Aorta (tissue), 5 donors: ENCODE measurements at regions of chr12 and their contacts with region 1.

Region 1: DNA sequence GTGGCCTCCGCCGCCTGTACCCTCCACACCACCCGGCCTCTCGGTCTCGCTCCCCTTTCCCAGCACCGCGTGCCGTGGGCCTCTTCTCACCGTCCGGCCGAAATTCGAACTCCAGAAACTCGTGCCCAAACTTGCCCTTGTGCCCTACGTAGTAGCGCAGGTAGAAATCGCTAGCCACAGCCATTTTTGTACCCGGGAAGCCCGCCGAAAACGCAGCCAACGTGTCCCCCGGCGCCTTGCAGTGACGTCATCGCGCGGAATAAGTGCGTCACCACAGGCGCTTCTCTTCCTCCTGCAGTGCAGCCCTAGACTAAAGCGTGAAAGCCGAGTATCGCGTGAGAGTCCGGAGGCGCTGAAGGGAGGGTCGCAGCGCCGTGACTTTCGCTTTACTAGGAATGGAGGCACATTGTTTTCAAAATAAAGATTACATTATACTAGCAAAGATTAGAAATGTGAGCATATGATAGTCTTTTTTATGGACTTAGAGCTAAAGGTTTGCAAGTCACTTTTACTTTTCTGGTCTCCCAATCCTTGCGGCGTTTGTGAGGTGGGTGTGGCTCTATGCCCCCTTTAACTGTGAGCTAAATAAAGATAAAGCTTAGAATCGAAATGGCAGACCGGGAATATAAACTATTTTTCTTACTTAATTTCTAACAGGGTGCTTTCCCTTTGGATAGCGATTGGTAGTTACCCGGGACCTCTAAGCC is at the start of gene MAGOHB:
- DNase-seq: peak; percentile 97 to 99
- ATAC-seq: peak; percentile 99
- H3K4me3 ChIP-seq: peak within 1 kb of the TSS; percentile 73 to 93
- H3K27ac ChIP-seq: peak within 1 kb of the TSS; percentile 9 to 24
- H3K4me1 ChIP-seq: peaks cover 0 to 3% of the 10 kb centered on the region in 2 donors
- H3K27me3 ChIP-seq: no peaks in the 10 kb centered on the region
- total RNA-seq, gene MAGOHB: 13.6 to 18.1 TPM

Region 2: GRCh38 chr12:10101042-10101579 is 512.4 kb before region 1 on chr12:
- intact Hi-C with region 1: no loop called
- DNase-seq: no peak
- ATAC-seq: peak; percentile 76
- H3K4me3 ChIP-seq: no peak overlapping the region
- H3K27ac ChIP-seq: no peak overlapping the region
- H3K4me1 ChIP-seq: no peaks in the 10 kb centered on the region
- H3K27me3 ChIP-seq: no peaks in the 10 kb centered on the region

Region 3: DNA sequence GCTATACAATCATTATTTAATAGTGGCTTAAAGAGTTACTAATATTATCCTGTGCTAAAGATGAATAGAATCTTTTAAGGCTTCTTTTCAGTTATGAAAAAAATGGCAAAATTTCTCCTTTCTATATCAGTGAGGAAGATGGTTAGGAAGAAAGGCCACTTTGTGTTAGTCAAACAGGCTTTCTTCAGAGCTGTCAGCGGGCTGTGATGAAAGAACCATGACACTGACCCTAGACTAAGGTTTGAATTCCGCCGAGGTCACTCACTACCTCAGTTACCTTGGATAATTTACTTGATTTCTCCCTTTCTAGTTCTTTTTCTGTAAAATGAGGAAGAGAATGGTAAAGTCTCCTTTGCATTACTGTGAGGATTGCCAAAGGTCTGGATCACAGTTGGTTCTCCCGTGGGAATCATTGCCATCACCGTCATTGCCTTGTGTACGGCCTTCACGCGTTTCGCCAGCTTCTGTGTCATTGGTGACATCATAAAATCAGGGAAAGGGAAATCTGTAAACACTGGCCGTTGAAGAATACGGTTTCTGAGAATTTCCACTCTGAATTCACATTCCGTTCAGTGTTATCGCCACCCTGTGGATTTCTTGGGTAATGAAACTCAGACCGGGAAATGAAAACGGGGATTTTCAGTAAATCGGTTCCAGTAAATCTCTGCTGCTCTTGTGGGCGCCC is 136.3 kb after region 1 on chr12:
- intact Hi-C with region 1: loop called (anchors 1 to 5 kb)
- DNase-seq: peak; percentile 71 to 81
- ATAC-seq: peak; percentile 98
- H3K4me3 ChIP-seq: peak overlapping the region in 1 of 2 donors; percentile 38
- H3K27ac ChIP-seq: no peak overlapping the region
- H3K4me1 ChIP-seq: peaks cover 0 to 1% of the 10 kb centered on the region in 2 donors
- H3K27me3 ChIP-seq: no peaks in the 10 kb centered on the region